Prostate gland (tissue), 2 donors: ENCODE measurements at regions of chr5 and their contacts with region 1.

Region 1: DNA sequence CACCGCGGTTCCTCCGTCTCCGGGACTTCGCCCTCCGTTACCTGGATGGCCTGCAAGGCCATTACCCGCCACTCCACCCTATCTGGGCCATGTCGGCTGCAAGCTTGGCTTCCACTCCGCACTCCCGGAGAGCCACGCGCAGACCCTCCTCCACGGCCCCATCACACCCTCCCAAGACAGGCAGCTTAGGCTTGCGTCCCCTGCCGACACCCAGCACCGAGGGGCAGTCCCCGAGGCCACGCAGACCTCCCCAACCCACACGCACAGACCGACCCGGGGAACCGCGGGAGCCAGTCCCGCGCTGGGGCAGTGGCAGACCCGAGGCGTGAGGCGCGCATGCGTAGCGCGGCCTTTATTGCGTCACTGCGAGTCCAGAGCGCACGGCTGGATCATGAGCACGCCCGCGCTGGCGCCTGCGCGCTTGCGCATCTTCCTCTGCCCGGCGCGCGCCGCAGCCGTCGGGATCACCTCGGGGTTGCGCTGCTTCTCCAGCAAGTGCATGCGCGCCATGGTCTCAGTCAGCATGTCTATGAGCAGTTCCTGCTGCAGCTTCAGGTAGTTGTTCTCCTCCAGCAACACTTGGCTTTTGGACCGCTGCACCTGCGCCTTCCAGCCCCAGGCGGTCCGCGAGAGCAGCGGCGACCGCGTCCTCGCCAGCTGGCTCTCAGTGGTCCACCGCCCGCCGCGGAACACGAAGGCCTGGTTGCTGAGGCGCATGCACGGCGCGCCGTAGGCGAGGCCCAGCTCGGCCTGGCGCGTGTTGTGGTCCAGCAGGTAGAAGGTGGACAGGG is 2.4 kb downstream of the CBY3 start:
- DNase-seq: peak; percentile 94
- H3K4me3 ChIP-seq: peak overlapping the region; percentile 64 to 79
- H3K27ac ChIP-seq: peak overlapping the region; percentile 86 to 87
- H3K4me1 ChIP-seq: peaks cover 4% of the 10 kb centered on the region
- H3K27me3 ChIP-seq: no peaks in the 10 kb centered on the region
- CTCF ChIP-seq: peak in 1 of 4 experiments; percentile 29
- POLR2A ChIP-seq: peak; percentile 82

Region 2: GRCh38 chr5:179450961-179451827 is 227.2 kb before region 1 on chr5:
- intact Hi-C with region 1: no loop called
- DNase-seq: no peak
- H3K4me3 ChIP-seq: no peak overlapping the region
- H3K27ac ChIP-seq: no peak overlapping the region
- H3K4me1 ChIP-seq: no peaks in the 10 kb centered on the region
- H3K27me3 ChIP-seq: no peaks in the 10 kb centered on the region
- CTCF ChIP-seq: no peak
- POLR2A ChIP-seq: no peak

Region 3: DNA sequence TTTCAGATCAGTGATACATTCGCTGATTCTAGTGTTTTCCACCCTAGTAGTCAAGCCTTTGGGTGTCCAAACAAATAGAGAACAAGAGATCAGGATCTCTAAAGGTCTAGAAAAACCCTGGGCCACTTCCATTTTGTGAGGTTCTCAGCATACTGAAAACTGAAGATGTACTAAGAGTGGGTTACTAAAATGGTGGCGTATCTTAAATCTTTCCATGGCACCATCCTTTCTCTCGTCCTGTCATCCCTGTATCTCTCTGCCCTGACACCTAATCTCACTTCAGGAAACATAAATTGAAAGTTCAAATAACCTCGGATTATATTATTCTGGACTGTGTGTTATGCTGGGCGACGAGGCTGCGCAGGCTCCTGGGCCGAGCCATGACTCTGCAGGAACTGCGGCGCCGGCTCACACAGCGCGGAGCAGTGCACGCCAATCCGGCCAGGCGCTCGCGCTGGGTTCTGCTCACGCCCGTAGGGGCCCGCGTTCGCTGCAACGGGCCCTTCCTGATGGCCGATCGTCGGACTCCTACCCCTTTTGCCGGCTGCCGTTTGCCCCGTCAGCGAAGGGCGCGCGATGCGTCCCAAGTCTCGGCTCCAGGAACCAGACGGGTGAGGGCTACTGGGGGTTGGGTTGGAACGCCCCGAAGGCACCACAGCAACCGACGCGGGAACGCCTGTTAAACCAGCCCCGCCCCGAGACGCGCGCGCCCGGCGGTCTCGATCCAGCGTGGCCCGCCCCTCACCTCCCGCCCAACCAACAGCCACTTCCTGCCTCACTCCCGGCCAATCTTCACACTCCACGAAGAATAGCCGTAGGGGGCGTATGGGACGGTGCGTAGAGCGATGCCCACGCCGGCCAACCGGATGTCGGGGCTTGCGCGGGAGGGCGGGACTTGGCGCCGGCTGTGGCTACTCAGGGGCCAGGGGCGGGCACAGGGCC is 19.8 kb after region 1 on chr5:
- intact Hi-C with region 1: loop called (anchors 2 kb)
- DNase-seq: peak; percentile 99
- H3K4me3 ChIP-seq: peak overlapping the region; percentile 77 to 98
- H3K27ac ChIP-seq: peak overlapping the region; percentile 91 to 95
- H3K4me1 ChIP-seq: no peaks in the 10 kb centered on the region
- H3K27me3 ChIP-seq: no peaks in the 10 kb centered on the region
- CTCF ChIP-seq: peak in 2 of 4 experiments; percentile 10 to 44
- POLR2A ChIP-seq: peak; percentile 82

Region 4: GRCh38 chr5:179732417-179732917 is 54.0 kb after region 1 on chr5 and contains the start of gene MAML1:
- intact Hi-C with region 1: loop called (anchors 2 kb)
- DNase-seq: peak; percentile 100
- H3K4me3 ChIP-seq: peak within 1 kb of the TSS; percentile 92 to 99
- H3K27ac ChIP-seq: peak within 1 kb of the TSS; percentile 92 to 97
- H3K4me1 ChIP-seq: no peaks in the 10 kb centered on the region
- H3K27me3 ChIP-seq: no peaks in the 10 kb centered on the region
- CTCF ChIP-seq: peak in 1 of 4 experiments; percentile 8
- POLR2A ChIP-seq: peak; percentile 93
- total RNA-seq, gene MAML1: 33.9 to 54.7 TPM